ENCODE measurements at regions of chr4 and their contacts with region 1.

Region 1: DNA sequence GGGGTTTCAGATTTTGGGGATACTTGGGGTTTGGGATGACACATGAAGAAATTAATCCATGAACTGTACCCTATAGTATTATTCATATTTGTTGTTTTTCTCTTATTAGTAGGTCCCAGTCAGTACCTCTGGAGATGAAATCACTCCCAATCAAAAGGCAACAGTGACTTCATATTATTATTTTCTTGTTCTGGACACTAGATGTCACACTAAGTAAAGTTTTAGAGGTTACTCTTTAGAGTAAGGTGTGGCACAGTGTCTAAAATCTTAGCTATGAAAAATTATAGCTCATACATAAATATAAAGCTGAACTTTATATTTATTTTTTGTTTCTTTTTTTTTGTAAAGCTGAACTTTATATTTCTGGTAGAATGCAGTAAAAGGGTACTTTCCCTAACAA is 35.1 kb downstream of the FAM114A1 start:
- DNase-seq: peak in 3 of 14 experiments; percentile 64 to 67 (median 66)
- ATAC-seq: peak; percentile 89
- H3K4me3 ChIP-seq: no peak overlapping the region
- H3K4me3 Mint-ChIP-seq: no peak overlapping the region
- H3K27ac ChIP-seq: no peak overlapping the region
- H3K27ac Mint-ChIP-seq: no peak overlapping the region
- H3K4me1 ChIP-seq: no peaks in the 10 kb centered on the region
- H3K4me1 Mint-ChIP-seq: no peaks in the 10 kb centered on the region
- H3K27me3 ChIP-seq: no peaks in the 10 kb centered on the region
- H3K27me3 Mint-ChIP-seq: peaks cover 4% of the 10 kb centered on the region
- CTCF ChIP-seq: peak; percentile 70

Region 2: GRCh38 chr4:38948551-38948950 is 45.9 kb after region 1 on chr4:
- CTCF ChIA-PET with region 1: interaction called, 3 read pairs
- POLR2A ChIA-PET with region 1: no interaction called
- intact Hi-C with region 1: loop called in 1 of 2 experiments (anchors 5 kb)
- DNase-seq: no peak
- ATAC-seq: no peak
- H3K4me3 ChIP-seq: no peak overlapping the region
- H3K4me3 Mint-ChIP-seq: no peak overlapping the region
- H3K27ac ChIP-seq: peak overlapping the region in 1 of 2 donors; percentile 23
- H3K27ac Mint-ChIP-seq: peak overlapping the region; percentile 86
- H3K4me1 ChIP-seq: peaks cover 10% of the 10 kb centered on the region
- H3K4me1 Mint-ChIP-seq: peaks cover 25% of the 10 kb centered on the region
- H3K27me3 ChIP-seq: no peaks in the 10 kb centered on the region
- H3K27me3 Mint-ChIP-seq: no peaks in the 10 kb centered on the region
- CTCF ChIP-seq: no peak

Region 3: DNA sequence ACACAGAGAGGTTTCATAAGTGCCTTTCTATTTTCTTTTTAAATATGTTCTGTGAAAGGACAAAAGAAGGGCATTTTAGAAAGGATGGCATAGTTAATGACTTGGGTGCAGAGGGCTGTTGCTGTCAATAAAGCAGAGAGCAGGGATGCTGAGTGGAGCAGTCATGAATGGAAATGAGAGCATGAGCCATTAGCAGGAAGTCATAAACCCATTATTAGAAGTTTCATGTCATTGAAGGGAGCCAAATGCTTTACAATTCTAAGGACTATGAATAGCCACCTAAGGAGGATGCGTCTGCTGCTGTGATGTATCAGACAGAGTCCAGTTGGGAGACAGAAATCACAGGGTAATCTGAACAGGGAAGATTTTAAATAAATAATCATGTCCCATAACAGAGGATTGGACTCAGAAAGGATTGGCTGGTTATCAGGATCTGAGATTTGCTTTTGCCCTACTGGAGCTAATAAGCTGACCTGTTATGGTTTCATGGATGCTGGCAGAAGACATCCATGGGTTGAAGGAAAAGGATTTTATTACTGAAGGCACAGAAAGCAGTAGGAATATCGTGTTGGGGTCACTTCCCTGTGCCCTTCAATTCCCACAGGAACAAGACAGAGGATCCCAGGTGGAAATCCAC is 232.1 kb after region 1 on chr4:
- CTCF ChIA-PET with region 1: interaction called, 77 read pairs
- POLR2A ChIA-PET with region 1: interaction called, 8 read pairs
- intact Hi-C with region 1: loop called (anchors 1 kb)
- DNase-seq: peak in 1 of 14 experiments; percentile 3
- ATAC-seq: no peak
- H3K4me3 ChIP-seq: no peak overlapping the region
- H3K4me3 Mint-ChIP-seq: no peak overlapping the region
- H3K27ac ChIP-seq: no peak overlapping the region
- H3K27ac Mint-ChIP-seq: no peak overlapping the region
- H3K4me1 ChIP-seq: peaks cover 6% of the 10 kb centered on the region
- H3K4me1 Mint-ChIP-seq: peaks cover 12% of the 10 kb centered on the region
- H3K27me3 ChIP-seq: no peaks in the 10 kb centered on the region
- H3K27me3 Mint-ChIP-seq: no peaks in the 10 kb centered on the region
- CTCF ChIP-seq: no peak

Region 4: GRCh38 chr4:39285111-39285795 is 382.6 kb after region 1 on chr4:
- CTCF ChIA-PET with region 1: no interaction called
- POLR2A ChIA-PET with region 1: no interaction called
- intact Hi-C with region 1: loop called in 1 of 2 experiments (anchors 10 kb)
- DNase-seq: no peak
- ATAC-seq: no peak
- H3K4me3 ChIP-seq: no peak overlapping the region
- H3K4me3 Mint-ChIP-seq: no peak overlapping the region
- H3K27ac ChIP-seq: no peak overlapping the region
- H3K27ac Mint-ChIP-seq: no peak overlapping the region
- H3K4me1 ChIP-seq: no peaks in the 10 kb centered on the region
- H3K4me1 Mint-ChIP-seq: no peaks in the 10 kb centered on the region
- H3K27me3 ChIP-seq: no peaks in the 10 kb centered on the region
- H3K27me3 Mint-ChIP-seq: no peaks in the 10 kb centered on the region
- CTCF ChIP-seq: no peak

Region 5: GRCh38 chr4:39410415-39410814 is 507.7 kb after region 1 on chr4:
- CTCF ChIA-PET with region 1: no interaction called
- POLR2A ChIA-PET with region 1: no interaction called
- intact Hi-C with region 1: loop called in 1 of 2 experiments (anchors 5 kb)
- DNase-seq: peak in 3 of 14 experiments; percentile 2 to 13 (median 4)
- ATAC-seq: no peak
- H3K4me3 ChIP-seq: no peak overlapping the region
- H3K4me3 Mint-ChIP-seq: no peak overlapping the region
- H3K27ac ChIP-seq: no peak overlapping the region
- H3K27ac Mint-ChIP-seq: no peak overlapping the region
- H3K4me1 ChIP-seq: no peaks in the 10 kb centered on the region
- H3K4me1 Mint-ChIP-seq: no peaks in the 10 kb centered on the region
- H3K27me3 ChIP-seq: no peaks in the 10 kb centered on the region
- H3K27me3 Mint-ChIP-seq: no peaks in the 10 kb centered on the region
- CTCF ChIP-seq: peak; percentile 12

Measured in CD4-positive, alpha-beta T cell (primary cell).